Prostate gland (tissue), 2 donors: ENCODE measurements at regions of chr5 and their contacts with region 1.

Region 1: DNA sequence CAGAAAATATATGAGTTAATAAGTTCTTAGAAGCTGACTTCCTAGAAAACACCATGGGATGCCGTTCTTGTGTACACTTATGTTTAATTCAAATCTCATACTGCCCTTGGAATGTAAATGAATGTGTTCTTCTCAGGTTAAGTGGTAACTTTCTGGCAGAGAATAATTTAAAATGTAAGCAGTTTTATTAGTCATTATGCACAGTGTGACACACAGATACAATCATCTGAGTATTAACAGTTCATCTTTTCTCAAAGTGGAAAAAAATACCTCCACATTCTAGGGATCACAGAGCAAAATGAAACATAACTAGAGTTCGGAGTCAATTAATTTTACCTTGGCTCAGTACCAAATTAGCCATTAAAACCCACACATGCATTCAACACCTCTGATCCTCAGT is 508.1 kb downstream of the CDH9 start:
- DNase-seq: no peak
- H3K4me3 ChIP-seq: no peak overlapping the region
- H3K27ac ChIP-seq: no peak overlapping the region
- H3K4me1 ChIP-seq: no peaks in the 10 kb centered on the region
- H3K27me3 ChIP-seq: no peaks in the 10 kb centered on the region
- CTCF ChIP-seq: no peak
- POLR2A ChIP-seq: no peak

Region 2: DNA sequence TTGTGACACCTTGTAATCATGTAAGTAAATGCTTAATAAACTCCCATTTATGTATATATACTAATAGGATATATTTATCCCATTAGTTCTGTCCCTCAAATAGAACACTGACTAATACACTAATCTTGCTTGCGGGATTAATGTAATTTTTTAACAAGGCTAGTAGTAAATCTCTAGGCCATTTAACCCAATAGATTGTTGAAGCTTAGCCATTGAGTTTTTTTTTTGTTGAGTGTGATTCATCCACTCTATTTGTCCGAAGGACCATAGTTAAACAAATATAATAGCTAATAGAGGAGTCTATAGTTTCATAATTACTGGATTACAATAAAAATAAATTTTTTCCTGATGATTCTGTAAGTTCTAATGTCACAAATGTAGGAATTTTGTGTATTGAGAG is 33.7 kb after region 1 on chr5:
- intact Hi-C with region 1: loop called (anchors 2 kb)
- DNase-seq: no peak
- H3K4me3 ChIP-seq: no peak overlapping the region
- H3K27ac ChIP-seq: no peak overlapping the region
- H3K4me1 ChIP-seq: no peaks in the 10 kb centered on the region
- H3K27me3 ChIP-seq: no peaks in the 10 kb centered on the region
- CTCF ChIP-seq: no peak
- POLR2A ChIP-seq: no peak